PC-9 (cell line): ENCODE measurements at regions of chr17 and their contacts with region 1.

Region 1: GRCh38 chr17:40303009-40303657 is 5.8 kb upstream of the RARA start:
- DNase-seq: peak in 1 of 2 experiments; percentile 48
- H3K4me3 ChIP-seq: no peak overlapping the region
- H3K27ac ChIP-seq: no peak overlapping the region
- H3K4me1 ChIP-seq: peaks cover 47% of the 10 kb centered on the region
- H3K27me3 ChIP-seq: no peaks in the 10 kb centered on the region
- CTCF ChIP-seq: peak; percentile 83

Region 2: GRCh38 chr17:40153603-40154236 is 149.4 kb before region 1 on chr17:
- CTCF ChIA-PET with region 1: no interaction called
- POLR2A ChIA-PET with region 1: interaction called, 14 read pairs
- intact Hi-C with region 1: no loop called
- DNase-seq: no peak
- H3K4me3 ChIP-seq: no peak overlapping the region
- H3K27ac ChIP-seq: no peak overlapping the region
- H3K4me1 ChIP-seq: no peaks in the 10 kb centered on the region
- H3K27me3 ChIP-seq: no peaks in the 10 kb centered on the region
- CTCF ChIP-seq: no peak

Region 3: DNA sequence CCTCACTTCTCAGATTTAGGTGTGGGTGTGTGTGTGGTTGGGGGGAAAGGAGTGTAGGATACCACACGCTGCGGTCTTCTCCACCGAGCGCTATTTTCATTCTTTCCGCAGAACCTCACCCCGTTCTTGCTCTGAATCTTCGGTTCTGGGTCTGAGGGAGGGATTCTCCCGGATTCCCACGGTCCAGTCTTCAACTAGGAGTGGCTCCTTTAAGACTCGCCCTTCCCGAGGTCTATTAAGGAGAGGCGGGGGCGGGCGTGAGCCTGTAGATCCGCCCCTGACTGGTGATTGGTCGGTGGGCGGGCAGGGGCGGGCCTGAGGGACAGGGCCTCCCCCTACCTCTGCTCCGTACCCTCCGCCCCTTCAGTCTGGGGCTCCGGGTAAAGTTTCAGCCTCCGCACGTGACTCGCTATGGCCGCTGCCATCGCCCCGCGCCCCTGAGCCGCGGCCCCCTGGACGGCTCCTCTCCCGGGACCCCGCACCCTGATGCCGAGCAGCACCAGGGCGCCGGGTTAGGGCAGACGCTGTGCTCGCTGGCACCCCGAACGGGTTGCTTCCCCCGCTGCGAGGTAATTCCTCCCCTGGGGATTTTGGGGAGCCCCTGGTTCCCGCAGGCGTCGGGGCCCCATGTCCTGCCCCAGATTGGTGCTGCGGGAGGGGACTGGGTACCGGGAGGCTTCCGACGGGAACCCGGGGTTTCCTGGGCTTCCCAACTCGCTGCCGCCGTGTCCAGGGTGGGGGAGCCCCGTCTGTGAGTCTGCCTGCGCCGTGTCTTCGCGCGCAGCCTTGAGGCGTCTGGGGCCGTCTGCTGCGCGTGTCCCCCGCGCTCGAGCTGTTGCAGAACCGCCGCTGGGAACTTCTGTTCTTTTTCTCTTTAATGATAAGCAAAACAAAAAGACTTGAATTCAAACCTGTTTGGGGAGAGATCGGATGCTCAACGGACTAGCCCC is 15.0 kb after region 1 on chr17:
- CTCF ChIA-PET with region 1: interaction called, 6 read pairs
- POLR2A ChIA-PET with region 1: interaction called, 3 read pairs
- intact Hi-C with region 1: loop called (anchors 2 kb)
- DNase-seq: peak; percentile 88 to 90
- H3K4me3 ChIP-seq: peak overlapping the region; percentile 99
- H3K27ac ChIP-seq: peak overlapping the region; percentile 75
- H3K4me1 ChIP-seq: peaks cover 85% of the 10 kb centered on the region
- H3K27me3 ChIP-seq: no peaks in the 10 kb centered on the region
- CTCF ChIP-seq: no peak

Region 4: GRCh38 chr17:40340880-40341807 is 38.0 kb after region 1 on chr17:
- CTCF ChIA-PET with region 1: no interaction called
- POLR2A ChIA-PET with region 1: no interaction called
- intact Hi-C with region 1: loop called (anchors 1 kb)
- DNase-seq: peak; percentile 73 to 82
- H3K4me3 ChIP-seq: peak overlapping the region; percentile 65
- H3K27ac ChIP-seq: peak overlapping the region; percentile 49
- H3K4me1 ChIP-seq: peaks cover 12% of the 10 kb centered on the region; the same call in 1 of the 2 replicates
- H3K27me3 ChIP-seq: no peaks in the 10 kb centered on the region
- CTCF ChIP-seq: peak; percentile 43; the same call in 1 of the 2 replicates

Region 5: DNA sequence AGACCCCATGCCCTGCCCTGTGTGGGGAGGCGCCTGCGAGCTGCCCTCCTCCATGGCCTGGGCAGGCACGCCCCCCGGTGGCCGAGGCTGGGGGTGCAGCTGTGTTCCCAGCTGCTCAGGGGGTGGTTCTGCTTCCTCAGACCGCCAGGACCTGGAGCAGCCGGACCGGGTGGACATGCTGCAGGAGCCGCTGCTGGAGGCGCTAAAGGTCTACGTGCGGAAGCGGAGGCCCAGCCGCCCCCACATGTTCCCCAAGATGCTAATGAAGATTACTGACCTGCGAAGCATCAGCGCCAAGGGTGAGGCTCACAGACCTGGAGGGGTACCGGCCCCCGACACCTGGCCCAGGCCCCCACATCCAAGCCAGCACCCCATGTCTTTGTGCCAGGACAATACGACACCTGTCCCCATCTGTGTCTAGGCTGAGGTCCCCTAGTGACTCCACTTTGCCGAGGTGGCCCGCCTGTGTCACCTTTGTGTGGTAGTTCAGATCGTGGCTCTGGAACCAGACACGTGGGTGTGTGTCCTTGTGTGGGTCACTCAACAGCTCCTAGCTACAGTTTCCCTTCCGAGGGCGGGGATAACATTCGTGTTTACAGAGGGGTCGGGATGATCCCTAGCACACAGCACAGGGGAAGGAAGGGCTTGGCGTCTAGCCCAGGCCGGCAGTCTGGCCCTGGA is 52.1 kb after region 1 on chr17:
- CTCF ChIA-PET with region 1: interaction called, 11 read pairs
- POLR2A ChIA-PET with region 1: interaction called, 4 read pairs
- intact Hi-C with region 1: loop called (anchors 1 kb)
- DNase-seq: peak in 1 of 2 experiments; percentile 63
- H3K4me3 ChIP-seq: no peak overlapping the region
- H3K27ac ChIP-seq: no peak overlapping the region
- H3K4me1 ChIP-seq: peaks cover 23% of the 10 kb centered on the region
- H3K27me3 ChIP-seq: no peaks in the 10 kb centered on the region
- CTCF ChIP-seq: peak; percentile 93

Region 6: GRCh38 chr17:40531051-40531991 is 228.2 kb after region 1 on chr17:
- CTCF ChIA-PET with region 1: interaction called, 3 read pairs
- POLR2A ChIA-PET with region 1: interaction called, 17 read pairs
- intact Hi-C with region 1: loop called (anchors 5 kb)
- DNase-seq: no peak
- H3K4me3 ChIP-seq: no peak overlapping the region
- H3K27ac ChIP-seq: no peak overlapping the region
- H3K4me1 ChIP-seq: peaks cover 35% of the 10 kb centered on the region
- H3K27me3 ChIP-seq: no peaks in the 10 kb centered on the region
- CTCF ChIP-seq: no peak

Region 7: DNA sequence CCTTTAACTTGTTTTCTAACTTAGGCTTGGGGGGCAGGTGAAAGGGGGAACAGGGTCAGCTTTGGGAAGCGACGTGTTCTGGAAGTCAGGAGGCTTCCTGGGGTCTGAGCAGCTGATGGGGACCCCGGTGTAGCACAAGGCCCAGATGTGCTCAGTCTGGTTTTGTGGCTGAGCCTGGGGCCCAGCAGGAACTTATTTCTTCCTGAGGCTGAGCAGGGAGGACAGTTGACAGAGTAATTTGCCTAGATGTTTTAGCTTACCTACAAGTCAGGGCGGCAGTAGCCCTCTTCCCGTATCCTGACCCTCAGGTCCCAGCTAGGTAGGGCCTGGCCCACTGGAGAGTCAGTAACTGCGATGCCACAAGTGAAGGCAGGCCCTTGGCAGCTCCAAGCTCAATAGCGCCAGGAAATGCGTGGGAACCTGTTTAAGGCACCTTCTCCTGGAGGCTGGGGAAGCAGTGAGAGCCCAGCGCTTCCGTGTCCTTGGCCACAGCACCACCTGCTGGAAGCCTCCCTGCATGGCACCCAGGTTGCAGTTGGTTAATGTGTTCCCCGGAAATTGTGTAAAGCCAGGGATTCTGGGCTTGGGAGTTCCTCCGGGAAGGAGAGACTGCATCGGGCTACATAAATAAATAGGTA is 256.9 kb after region 1 on chr17:
- CTCF ChIA-PET with region 1: no interaction called
- POLR2A ChIA-PET with region 1: interaction called, 3 read pairs
- intact Hi-C with region 1: loop called (anchors 2 kb)
- DNase-seq: peak; percentile 79 to 91
- H3K4me3 ChIP-seq: no peak overlapping the region
- H3K27ac ChIP-seq: no peak overlapping the region
- H3K4me1 ChIP-seq: peaks cover 4% of the 10 kb centered on the region; the same call in 1 of the 2 replicates
- H3K27me3 ChIP-seq: peaks cover 19% of the 10 kb centered on the region
- CTCF ChIP-seq: peak; percentile 95

Region 8: GRCh38 chr17:40615295-40615988 is 312.3 kb after region 1 on chr17:
- CTCF ChIA-PET with region 1: no interaction called
- POLR2A ChIA-PET with region 1: no interaction called
- intact Hi-C with region 1: no loop called
- DNase-seq: peak; percentile 72
- H3K4me3 ChIP-seq: no peak overlapping the region
- H3K27ac ChIP-seq: no peak overlapping the region
- H3K4me1 ChIP-seq: peaks cover 10% of the 10 kb centered on the region
- H3K27me3 ChIP-seq: no peaks in the 10 kb centered on the region
- CTCF ChIP-seq: peak; percentile 73